ENCODE measurements at regions of chr11 and their contacts with region 1.

Region 1: GRCh38 chr11:44621140-44621681 is 55.7 kb downstream of the CD82 start:
- DNase-seq: peak; percentile 33 to 64 (median 55)
- ATAC-seq: peak; percentile 76
- H3K4me3 ChIP-seq: no peak overlapping the region
- H3K4me3 Mint-ChIP-seq: no peak overlapping the region
- H3K27ac ChIP-seq: no peak overlapping the region
- H3K27ac Mint-ChIP-seq: peak overlapping the region in 1 of 9 donors; percentile 12
- H3K4me1 ChIP-seq: peaks cover 0 to 20% of the 10 kb centered on the region in 2 donors
- H3K4me1 Mint-ChIP-seq: peaks cover 20 to 44% (median 30%) of the 10 kb centered on the region in 7 donors
- H3K27me3 ChIP-seq: no peaks in the 10 kb centered on the region
- H3K27me3 Mint-ChIP-seq: no peaks in the 10 kb centered on the region

Region 2: DNA sequence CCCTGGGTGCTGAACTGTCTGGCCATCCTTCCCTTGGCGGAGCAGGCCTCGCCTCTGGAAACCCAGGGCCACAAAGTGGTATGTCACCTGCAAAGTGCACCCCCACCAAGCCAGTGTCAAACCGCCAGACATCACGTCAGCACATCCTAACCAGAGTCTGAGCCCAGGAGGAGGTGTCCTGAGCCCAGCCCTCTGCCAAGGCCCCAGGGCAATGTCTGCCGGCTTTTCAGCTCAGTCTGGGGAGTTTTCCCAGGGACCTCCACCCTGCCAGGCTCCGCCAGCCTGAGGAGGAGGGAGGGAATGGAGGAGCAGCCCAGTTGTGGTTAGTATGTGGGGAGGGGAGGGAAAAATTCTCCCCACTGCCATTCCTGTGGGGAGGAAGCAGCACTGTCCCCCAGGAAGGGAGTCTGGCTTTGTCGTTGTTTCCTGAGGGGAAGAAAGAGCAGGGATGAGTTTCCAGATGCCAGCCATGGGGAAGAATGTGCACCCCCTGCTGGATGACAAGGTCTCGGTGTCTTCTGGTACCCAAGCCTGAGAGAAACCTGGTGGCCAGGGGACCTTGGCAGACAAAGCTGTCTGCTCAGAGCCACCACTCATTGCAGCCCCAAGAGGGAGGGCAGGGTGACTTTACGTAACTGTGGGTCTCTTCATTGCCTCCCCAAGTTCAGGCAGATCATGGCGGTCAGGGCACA is 137.1 kb before region 1 on chr11:
- CTCF ChIA-PET with region 1: no interaction called
- POLR2A ChIA-PET with region 1: no interaction called
- intact Hi-C with region 1: no loop called
- DNase-seq: no peak
- ATAC-seq: no peak
- H3K4me3 ChIP-seq: no peak overlapping the region
- H3K4me3 Mint-ChIP-seq: no peak overlapping the region
- H3K27ac ChIP-seq: no peak overlapping the region
- H3K27ac Mint-ChIP-seq: no peak overlapping the region
- H3K4me1 ChIP-seq: no peaks in the 10 kb centered on the region
- H3K4me1 Mint-ChIP-seq: no peaks in the 10 kb centered on the region
- H3K27me3 ChIP-seq: no peaks in the 10 kb centered on the region
- H3K27me3 Mint-ChIP-seq: peaks cover 0 to 11% (median 6%) of the 10 kb centered on the region in 5 donors

Region 3: DNA sequence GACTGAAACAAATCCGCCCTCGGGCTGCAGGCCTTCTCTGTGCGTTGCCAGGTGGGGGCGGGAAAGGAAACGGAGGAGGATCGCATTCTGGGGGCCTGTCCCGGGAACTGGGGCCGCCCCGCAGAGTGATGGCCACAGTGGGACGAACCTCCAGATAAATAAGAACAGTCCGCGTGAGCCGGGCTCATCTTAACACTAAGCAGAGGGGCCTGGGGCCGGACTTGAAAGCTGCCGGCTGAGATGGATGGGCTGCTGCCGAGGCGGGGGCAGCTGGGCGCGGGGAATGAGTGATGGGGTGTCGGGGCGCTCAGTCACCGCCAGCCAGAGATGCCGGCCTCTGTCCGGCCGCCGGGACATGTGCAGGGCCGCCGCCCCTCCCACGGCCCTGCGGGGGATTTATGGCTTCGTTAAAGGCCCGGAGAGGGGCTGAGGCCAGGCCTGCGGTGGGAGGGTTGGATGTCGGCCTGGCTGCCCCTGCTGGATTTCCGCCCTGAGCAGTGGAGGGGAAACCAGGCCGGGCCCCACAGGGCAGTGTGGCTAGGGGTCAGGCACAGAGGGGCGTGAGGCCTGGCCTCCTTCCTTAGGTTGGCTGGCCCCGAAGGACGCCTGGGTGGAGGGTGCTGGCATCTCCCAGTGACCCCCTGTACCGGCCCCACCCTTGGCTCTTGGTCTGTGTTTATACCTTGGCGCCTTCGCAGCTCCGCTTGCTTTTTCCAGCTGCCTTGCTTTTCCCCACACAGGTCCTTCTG is 101.0 kb before region 1 on chr11:
- CTCF ChIA-PET with region 1: no interaction called
- POLR2A ChIA-PET with region 1: no interaction called
- intact Hi-C with region 1: loop called in 1 of 2 experiments (anchors 1 kb)
- DNase-seq: no peak
- ATAC-seq: no peak
- H3K4me3 ChIP-seq: no peak overlapping the region
- H3K4me3 Mint-ChIP-seq: no peak overlapping the region
- H3K27ac ChIP-seq: no peak overlapping the region
- H3K27ac Mint-ChIP-seq: no peak overlapping the region
- H3K4me1 ChIP-seq: no peaks in the 10 kb centered on the region
- H3K4me1 Mint-ChIP-seq: peaks cover 0 to 4% (median 3%) of the 10 kb centered on the region in 7 donors
- H3K27me3 ChIP-seq: no peaks in the 10 kb centered on the region
- H3K27me3 Mint-ChIP-seq: peaks cover 14 to 41% (median 22%) of the 10 kb centered on the region in 5 donors

Region 4: DNA sequence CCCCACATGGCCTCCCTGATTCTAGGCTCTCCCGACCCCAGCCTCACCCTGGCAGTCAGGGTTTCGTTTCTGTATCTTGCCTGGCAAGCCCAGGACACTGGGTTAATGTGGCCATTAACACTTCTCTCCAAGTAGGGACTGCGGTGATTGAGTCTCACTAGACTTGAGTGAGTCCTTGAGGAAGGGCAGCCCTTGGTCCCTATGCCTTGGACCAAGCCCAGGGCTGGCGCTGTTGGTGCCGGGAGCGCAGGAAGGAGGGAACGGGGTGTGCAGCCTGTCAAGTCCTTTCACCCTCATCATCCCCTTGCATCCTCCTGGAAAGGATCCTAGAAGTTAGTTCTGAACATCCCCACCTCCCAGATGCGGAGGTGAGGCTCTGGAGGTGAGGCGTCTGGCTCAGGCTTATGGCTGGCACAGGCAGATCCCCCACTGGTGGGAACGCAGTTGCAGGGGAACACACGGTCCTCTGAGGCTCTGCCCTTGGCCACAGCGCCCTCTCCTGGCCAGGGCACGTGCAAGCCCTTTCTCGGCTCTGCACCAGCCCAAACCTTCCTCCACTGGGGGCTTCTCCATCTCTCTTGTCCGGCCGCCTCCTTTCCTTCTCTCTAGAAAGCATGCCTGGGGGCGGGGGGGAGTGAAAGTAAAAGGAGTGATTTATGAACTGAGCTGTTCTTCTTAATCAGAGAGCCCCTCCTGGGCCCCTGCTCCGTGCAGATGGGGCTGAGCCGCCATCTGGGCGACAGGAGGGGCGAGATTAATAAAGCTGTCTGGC is 272.8 kb after region 1 on chr11:
- CTCF ChIA-PET with region 1: no interaction called
- POLR2A ChIA-PET with region 1: no interaction called
- intact Hi-C with region 1: loop called (anchors 1 to 2 kb)
- DNase-seq: peak; percentile 16 to 65 (median 45)
- ATAC-seq: peak; percentile 84
- H3K4me3 ChIP-seq: no peak overlapping the region
- H3K4me3 Mint-ChIP-seq: no peak overlapping the region
- H3K27ac ChIP-seq: no peak overlapping the region
- H3K27ac Mint-ChIP-seq: peak overlapping the region in 1 of 9 donors; percentile 45
- H3K4me1 ChIP-seq: no peaks in the 10 kb centered on the region
- H3K4me1 Mint-ChIP-seq: peaks cover 0 to 12% (median 4%) of the 10 kb centered on the region in 7 donors
- H3K27me3 ChIP-seq: no peaks in the 10 kb centered on the region
- H3K27me3 Mint-ChIP-seq: no peaks in the 10 kb centered on the region

Measured in naive thymus-derived CD4-positive, alpha-beta T cell (primary cell).